ENCODE measurements at regions of chr1 and their contacts with region 1.

Region 1: GRCh38 chr1:84143796-84144565 is at the start of gene PRKACB:
- DNase-seq: peak in 4 of 9 experiments; percentile 5 to 82 (median 36)
- ATAC-seq: peak; percentile 88
- H3K4me3 ChIP-seq: peak within 1 kb of the TSS; percentile 61 to 65
- H3K4me3 Mint-ChIP-seq: peak within 1 kb of the TSS; percentile 97
- H3K27ac ChIP-seq: peak within 1 kb of the TSS; percentile 59 to 82
- H3K27ac Mint-ChIP-seq: peak within 1 kb of the TSS; percentile 100
- H3K4me1 ChIP-seq: peaks cover 41% of the 10 kb centered on the region
- H3K4me1 Mint-ChIP-seq: peaks cover 45% of the 10 kb centered on the region
- H3K27me3 ChIP-seq: no peaks in the 10 kb centered on the region
- H3K27me3 Mint-ChIP-seq: no peaks in the 10 kb centered on the region
- CTCF ChIP-seq: no peak
- total RNA-seq, gene PRKACB: 50.9 to 55.8 TPM

Region 2: DNA sequence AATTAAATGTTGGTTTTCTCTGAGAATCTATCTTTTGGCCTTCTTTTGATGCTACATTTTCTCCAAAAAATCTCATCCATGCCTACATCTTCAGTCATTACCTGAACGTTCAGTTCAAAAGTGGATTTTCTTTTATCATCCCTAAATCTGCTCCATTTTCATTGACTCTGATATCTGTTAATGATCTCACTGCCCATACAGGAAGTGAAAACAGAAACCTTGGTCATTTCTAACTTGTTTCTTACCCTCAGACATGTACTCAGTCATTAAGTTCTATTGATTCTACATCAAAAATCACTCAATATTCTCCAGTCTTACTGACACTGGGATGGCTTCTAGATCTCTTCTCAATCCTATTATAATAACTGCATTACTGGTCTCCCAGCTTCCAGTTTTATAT is 22.8 kb after region 1 on chr1:
- CTCF ChIA-PET with region 1: interaction called, 5 read pairs
- POLR2A ChIA-PET with region 1: interaction called, 16 read pairs
- intact Hi-C with region 1: loop called in 1 of 2 experiments (anchors 2 kb)
- DNase-seq: peak in 1 of 9 experiments; percentile 38
- ATAC-seq: no peak
- H3K4me3 ChIP-seq: no peak overlapping the region
- H3K4me3 Mint-ChIP-seq: peak overlapping the region; percentile 59
- H3K27ac ChIP-seq: peak overlapping the region in 1 of 2 experiments; percentile 65
- H3K27ac Mint-ChIP-seq: peak overlapping the region; percentile 56
- H3K4me1 ChIP-seq: peaks cover 63% of the 10 kb centered on the region
- H3K4me1 Mint-ChIP-seq: peaks cover 86% of the 10 kb centered on the region
- H3K27me3 ChIP-seq: no peaks in the 10 kb centered on the region
- H3K27me3 Mint-ChIP-seq: no peaks in the 10 kb centered on the region
- CTCF ChIP-seq: no peak

Region 3: DNA sequence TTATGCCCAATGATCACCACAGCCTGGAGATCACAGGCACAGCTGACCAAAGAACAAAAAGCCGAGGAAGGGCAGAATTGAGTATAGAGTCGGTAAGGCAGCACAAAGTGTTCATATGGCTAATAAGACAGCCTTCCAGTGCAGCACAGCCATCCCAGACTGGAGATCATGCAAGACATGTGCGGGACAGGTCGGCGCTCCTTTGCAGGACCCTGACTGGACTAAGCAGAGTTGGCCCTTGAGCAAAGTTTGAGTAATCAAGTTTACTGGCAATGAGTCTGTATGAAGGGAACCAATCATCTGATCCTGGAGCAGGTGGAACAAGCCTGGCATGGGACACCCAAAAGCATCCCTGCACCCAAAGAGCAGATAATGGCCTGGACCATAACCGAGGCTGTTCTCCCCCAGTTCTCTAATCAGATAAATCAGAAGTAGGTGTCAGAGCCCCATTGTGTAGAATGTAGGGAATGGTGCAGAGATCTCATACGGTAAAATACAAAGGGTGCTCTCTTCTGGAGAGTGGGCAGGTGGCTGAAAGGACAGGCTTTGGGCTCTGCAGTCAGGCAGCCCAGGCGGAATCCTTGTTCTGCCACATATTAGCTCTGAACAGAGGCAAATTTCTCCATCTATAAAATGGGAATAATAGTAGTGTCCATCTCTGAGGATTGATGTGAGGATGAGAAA is 243.6 kb after region 1 on chr1:
- CTCF ChIA-PET with region 1: interaction called, 7 read pairs
- POLR2A ChIA-PET with region 1: no interaction called
- intact Hi-C with region 1: loop called (anchors 1 to 2 kb)
- DNase-seq: peak in 2 of 9 experiments; percentile 15 to 38
- ATAC-seq: peak; percentile 49
- H3K4me3 ChIP-seq: no peak overlapping the region
- H3K4me3 Mint-ChIP-seq: no peak overlapping the region
- H3K27ac ChIP-seq: no peak overlapping the region
- H3K27ac Mint-ChIP-seq: no peak overlapping the region
- H3K4me1 ChIP-seq: no peaks in the 10 kb centered on the region
- H3K4me1 Mint-ChIP-seq: no peaks in the 10 kb centered on the region
- H3K27me3 ChIP-seq: no peaks in the 10 kb centered on the region
- H3K27me3 Mint-ChIP-seq: peaks cover 2% of the 10 kb centered on the region
- CTCF ChIP-seq: no peak

Region 4: GRCh38 chr1:84462118-84462517 is 318.1 kb after region 1 on chr1:
- CTCF ChIA-PET with region 1: no interaction called
- POLR2A ChIA-PET with region 1: no interaction called
- intact Hi-C with region 1: no loop called
- DNase-seq: no peak
- ATAC-seq: no peak
- H3K4me3 ChIP-seq: no peak overlapping the region
- H3K4me3 Mint-ChIP-seq: no peak overlapping the region
- H3K27ac ChIP-seq: no peak overlapping the region
- H3K27ac Mint-ChIP-seq: no peak overlapping the region
- H3K4me1 ChIP-seq: no peaks in the 10 kb centered on the region
- H3K4me1 Mint-ChIP-seq: no peaks in the 10 kb centered on the region
- H3K27me3 ChIP-seq: no peaks in the 10 kb centered on the region
- H3K27me3 Mint-ChIP-seq: peaks cover 33% of the 10 kb centered on the region
- CTCF ChIP-seq: no peak

Region 5: DNA sequence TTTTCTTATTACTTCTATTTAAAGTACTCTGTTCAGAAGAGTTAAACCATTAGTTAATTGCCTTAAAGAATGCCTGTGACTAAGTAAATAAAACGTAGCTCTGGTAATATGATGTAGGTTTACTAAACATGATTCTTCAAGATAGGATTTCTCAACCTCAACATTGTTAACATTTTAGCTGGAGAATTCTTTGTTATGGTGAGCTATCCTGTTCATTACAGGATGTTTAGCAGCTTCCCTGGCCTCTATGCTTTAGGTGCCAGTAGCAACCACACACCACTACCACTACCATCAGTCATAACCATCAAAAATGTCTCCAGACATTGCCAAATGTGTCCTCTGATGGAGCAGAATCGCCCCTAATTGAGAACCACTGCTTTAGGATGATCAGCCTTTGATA is 345.8 kb after region 1 on chr1:
- CTCF ChIA-PET with region 1: no interaction called
- POLR2A ChIA-PET with region 1: no interaction called
- intact Hi-C with region 1: loop called in 1 of 2 experiments (anchors 5 kb)
- DNase-seq: no peak
- ATAC-seq: no peak
- H3K4me3 ChIP-seq: no peak overlapping the region
- H3K4me3 Mint-ChIP-seq: no peak overlapping the region
- H3K27ac ChIP-seq: no peak overlapping the region
- H3K27ac Mint-ChIP-seq: no peak overlapping the region
- H3K4me1 ChIP-seq: peaks cover 10% of the 10 kb centered on the region
- H3K4me1 Mint-ChIP-seq: peaks cover 36% of the 10 kb centered on the region
- H3K27me3 ChIP-seq: no peaks in the 10 kb centered on the region
- H3K27me3 Mint-ChIP-seq: no peaks in the 10 kb centered on the region
- CTCF ChIP-seq: no peak

Region 6: GRCh38 chr1:84611796-84612195 is 467.8 kb after region 1 on chr1:
- CTCF ChIA-PET with region 1: interaction called, 10 read pairs
- POLR2A ChIA-PET with region 1: no interaction called
- intact Hi-C with region 1: no loop called
- DNase-seq: peak in 3 of 9 experiments; percentile 40 to 73 (median 51)
- ATAC-seq: peak; percentile 90
- H3K4me3 ChIP-seq: no peak overlapping the region
- H3K4me3 Mint-ChIP-seq: peak overlapping the region; percentile 71
- H3K27ac ChIP-seq: peak overlapping the region; percentile 9
- H3K27ac Mint-ChIP-seq: peak overlapping the region; percentile 94
- H3K4me1 ChIP-seq: peaks cover 21% of the 10 kb centered on the region
- H3K4me1 Mint-ChIP-seq: peaks cover 22% of the 10 kb centered on the region
- H3K27me3 ChIP-seq: no peaks in the 10 kb centered on the region
- H3K27me3 Mint-ChIP-seq: no peaks in the 10 kb centered on the region
- CTCF ChIP-seq: no peak

Region 7: DNA sequence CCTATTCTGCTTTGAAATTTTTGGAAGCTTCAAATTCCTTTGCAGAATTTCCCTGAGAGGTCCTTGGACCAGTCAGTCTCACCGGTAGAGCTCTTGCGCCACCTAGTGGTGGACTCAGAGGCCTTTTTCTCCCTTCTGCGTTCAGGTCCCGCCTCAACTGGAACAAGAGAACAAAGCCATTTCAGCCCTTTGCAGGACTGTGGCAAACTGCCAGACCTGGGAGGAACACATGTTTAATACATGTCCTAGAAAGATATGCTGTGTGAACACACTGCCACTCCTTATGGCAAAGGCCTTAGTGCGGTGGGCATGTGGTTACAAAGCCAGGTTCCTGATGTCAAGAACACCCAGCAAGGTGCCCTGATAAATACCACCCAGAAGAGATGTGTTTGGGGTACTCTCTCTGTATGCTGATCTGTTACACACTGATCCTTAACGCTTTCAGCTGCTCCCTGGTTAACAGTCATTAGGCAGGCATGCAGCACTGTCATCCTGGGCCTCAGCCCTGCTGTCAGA is 628.5 kb after region 1 on chr1:
- CTCF ChIA-PET with region 1: interaction called, 8 read pairs
- POLR2A ChIA-PET with region 1: interaction called, 3 read pairs
- intact Hi-C with region 1: loop called (anchors 1 to 5 kb)
- DNase-seq: peak; percentile 25 to 88 (median 66)
- ATAC-seq: peak; percentile 73
- H3K4me3 ChIP-seq: no peak overlapping the region
- H3K4me3 Mint-ChIP-seq: no peak overlapping the region
- H3K27ac ChIP-seq: no peak overlapping the region
- H3K27ac Mint-ChIP-seq: no peak overlapping the region
- H3K4me1 ChIP-seq: no peaks in the 10 kb centered on the region
- H3K4me1 Mint-ChIP-seq: peaks cover 3% of the 10 kb centered on the region
- H3K27me3 ChIP-seq: no peaks in the 10 kb centered on the region
- H3K27me3 Mint-ChIP-seq: peaks cover 3% of the 10 kb centered on the region
- CTCF ChIP-seq: peak; percentile 95

Measured in CD8-positive, alpha-beta T cell (primary cell).